Gastrocnemius medialis (tissue), 4 donors: ENCODE measurements at regions of chr3 and their contacts with region 1.

Region 1: DNA sequence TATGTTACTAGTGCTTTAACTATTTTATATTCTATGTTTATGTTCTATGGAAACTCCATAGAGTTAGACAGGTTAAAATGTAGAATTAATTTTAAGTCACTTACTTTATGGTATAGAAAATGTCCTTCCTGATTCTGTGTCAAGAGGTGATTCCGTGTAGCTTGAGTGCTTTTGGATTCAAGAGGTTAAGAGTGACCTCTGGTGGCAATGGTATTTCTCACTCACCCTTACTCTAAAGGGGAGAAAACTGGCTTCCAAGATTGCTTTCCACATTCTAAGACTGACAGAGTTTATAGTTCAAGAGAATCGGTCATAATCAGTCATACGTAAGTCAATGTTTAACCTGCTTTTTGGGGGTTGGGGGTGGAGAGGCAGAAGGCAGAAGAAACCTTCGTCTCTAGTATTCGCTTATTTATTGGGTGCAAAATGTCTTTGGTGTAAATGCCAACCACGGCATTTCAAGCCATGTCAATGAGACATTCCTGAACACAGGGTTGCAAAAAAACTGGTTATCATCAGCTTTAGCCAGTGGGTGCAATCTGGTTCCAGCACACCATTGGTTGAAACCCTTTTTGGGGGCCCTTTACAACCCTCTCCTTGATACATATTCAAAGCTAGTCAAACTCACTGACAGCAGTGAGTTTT is 92.0 kb upstream of the VGLL3 start:
- DNase-seq: no peak
- ATAC-seq: peak in 1 of 2 donors; percentile 50
- H3K4me3 ChIP-seq: no peak overlapping the region
- H3K27ac ChIP-seq: no peak overlapping the region
- H3K4me1 ChIP-seq: no peaks in the 10 kb centered on the region
- H3K27me3 ChIP-seq: no peaks in the 10 kb centered on the region
- CTCF ChIP-seq: peak in 4 of 5 experiments; percentile 9 to 45 (median 28)
- POLR2A ChIP-seq: no peak

Region 2: DNA sequence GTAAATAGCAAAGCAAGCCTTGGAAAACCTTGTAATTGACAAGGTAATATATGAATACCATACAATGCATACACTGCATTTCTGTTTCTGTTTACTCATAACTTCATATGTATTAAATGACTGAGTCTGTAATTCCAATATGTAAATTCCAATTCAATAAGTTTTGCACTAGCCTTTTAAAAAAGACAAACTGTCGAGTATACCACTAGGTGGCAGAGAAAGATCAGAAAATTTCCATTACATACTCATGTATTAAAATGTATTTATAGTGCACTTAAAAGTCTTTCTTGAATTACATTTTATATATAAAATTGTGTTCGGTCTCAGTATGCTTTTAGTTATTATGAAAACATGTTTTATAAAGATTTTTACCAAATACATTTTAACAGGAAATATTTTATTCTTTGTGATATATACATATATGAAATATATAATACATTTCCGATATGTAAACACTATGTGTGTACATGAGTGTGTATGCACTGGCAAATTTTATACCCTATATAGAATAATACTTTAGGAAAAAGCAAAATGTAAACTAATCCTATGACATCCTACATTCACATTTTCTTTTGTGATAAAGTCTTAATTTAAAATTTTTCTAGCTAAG is 308.7 kb before region 1 on chr3:
- in situ Hi-C with region 1: loop called in 1 of 4 experiments (anchors 5 kb)
- intact Hi-C with region 1: no loop called
- DNase-seq: no peak
- ATAC-seq: no peak
- H3K4me3 ChIP-seq: no peak overlapping the region
- H3K27ac ChIP-seq: no peak overlapping the region
- H3K4me1 ChIP-seq: no peaks in the 10 kb centered on the region
- H3K27me3 ChIP-seq: no peaks in the 10 kb centered on the region
- CTCF ChIP-seq: peak in 3 of 5 experiments; percentile 23 to 41 (median 33)
- POLR2A ChIP-seq: no peak

Region 3: GRCh38 chr3:86785386-86785785 is 297.5 kb before region 1 on chr3:
- in situ Hi-C with region 1: loop called in 3 of 4 experiments (anchors 10 kb)
- intact Hi-C with region 1: loop called (anchors 5 kb)
- DNase-seq: no peak
- ATAC-seq: no peak
- H3K4me3 ChIP-seq: no peak overlapping the region
- H3K27ac ChIP-seq: no peak overlapping the region
- H3K4me1 ChIP-seq: no peaks in the 10 kb centered on the region
- H3K27me3 ChIP-seq: no peaks in the 10 kb centered on the region
- CTCF ChIP-seq: peak in 1 of 5 experiments; percentile 6
- POLR2A ChIP-seq: no peak

Region 4: GRCh38 chr3:86969500-86970189 is 113.3 kb before region 1 on chr3:
- in situ Hi-C with region 1: no loop called
- intact Hi-C with region 1: loop called (anchors 2 kb)
- DNase-seq: no peak
- ATAC-seq: no peak
- H3K4me3 ChIP-seq: no peak overlapping the region
- H3K27ac ChIP-seq: no peak overlapping the region
- H3K4me1 ChIP-seq: no peaks in the 10 kb centered on the region
- H3K27me3 ChIP-seq: no peaks in the 10 kb centered on the region
- CTCF ChIP-seq: peak in 4 of 5 experiments; percentile 5 to 40 (median 32)
- POLR2A ChIP-seq: no peak